ENCODE measurements at regions of chr14 and their contacts with region 1.

Region 1: GRCh38 chr14:49892636-49893308 is at the start of gene ARF6:
- DNase-seq: peak; percentile 100
- ATAC-seq: peak; percentile 99
- total RNA-seq, gene ARF6: 25.1 TPM

Region 2: GRCh38 chr14:49852301-49853157 is 40.2 kb before region 1 on chr14 and contains the start of gene NEMF:
- intact Hi-C with region 1: no loop called
- DNase-seq: peak; percentile 94
- ATAC-seq: peak; percentile 91
- total RNA-seq, gene NEMF: 60.5 TPM

Region 3: GRCh38 chr14:49946320-49947141 is 53.8 kb after region 1 on chr14:
- intact Hi-C with region 1: loop called (anchors 5 kb)
- DNase-seq: no peak
- ATAC-seq: no peak

Region 4: GRCh38 chr14:50003213-50004031 is 110.7 kb after region 1 on chr14:
- intact Hi-C with region 1: loop called (anchors 2 kb)
- DNase-seq: peak; percentile 92
- ATAC-seq: peak; percentile 76

Region 5: GRCh38 chr14:50045039-50045711 is 152.4 kb after region 1 on chr14:
- intact Hi-C with region 1: loop called (anchors 5 kb)
- DNase-seq: peak; percentile 83
- ATAC-seq: peak; percentile 89